ENCODE measurements at regions of chr21 and their contacts with region 1.

Region 1: DNA sequence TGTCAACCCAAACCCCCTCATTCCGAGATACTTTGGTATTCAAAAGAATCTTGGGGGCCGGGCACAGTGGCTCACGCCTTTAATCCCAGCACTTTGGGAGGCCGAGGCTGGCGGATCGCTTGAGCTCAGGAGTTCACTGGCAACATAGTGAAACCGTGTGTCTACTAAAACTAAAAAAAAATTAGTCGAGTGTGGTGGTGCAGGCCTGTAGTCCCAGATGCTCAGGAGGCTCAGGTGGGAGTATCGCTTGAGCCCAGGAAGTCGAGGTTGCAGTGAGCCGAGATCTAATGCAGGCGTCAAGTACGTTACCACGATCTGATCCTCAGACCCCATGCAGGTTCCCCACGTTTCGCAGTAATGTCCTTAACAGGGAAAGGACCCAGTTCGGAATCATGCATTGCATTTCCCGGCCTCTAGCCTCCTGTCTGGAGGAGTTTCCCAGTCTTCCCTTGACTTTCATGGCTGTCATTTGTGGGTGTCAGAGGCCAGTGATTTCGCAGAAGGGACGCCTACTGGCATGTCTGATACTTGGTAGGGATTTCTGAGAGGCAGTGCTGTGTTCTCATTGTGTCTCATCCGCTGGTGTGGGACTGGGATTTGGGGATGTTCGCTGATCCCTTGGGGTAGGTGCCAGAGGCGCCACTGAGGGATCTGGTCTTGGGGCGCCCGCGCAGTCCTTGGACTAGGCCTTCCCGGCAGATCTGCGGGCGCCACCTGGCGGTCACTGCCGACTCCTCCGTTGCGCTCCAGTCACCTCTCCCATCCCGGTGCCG is 39.3 kb upstream of the HMGN1 start:
- DNase-seq: peak; percentile 98

Region 2: GRCh38 chr21:38092051-38092450 is 1296.2 kb before region 1 on chr21:
- intact Hi-C with region 1: loop called in 1 of 2 experiments (anchors 5 kb)
- DNase-seq: no peak

Region 3: DNA sequence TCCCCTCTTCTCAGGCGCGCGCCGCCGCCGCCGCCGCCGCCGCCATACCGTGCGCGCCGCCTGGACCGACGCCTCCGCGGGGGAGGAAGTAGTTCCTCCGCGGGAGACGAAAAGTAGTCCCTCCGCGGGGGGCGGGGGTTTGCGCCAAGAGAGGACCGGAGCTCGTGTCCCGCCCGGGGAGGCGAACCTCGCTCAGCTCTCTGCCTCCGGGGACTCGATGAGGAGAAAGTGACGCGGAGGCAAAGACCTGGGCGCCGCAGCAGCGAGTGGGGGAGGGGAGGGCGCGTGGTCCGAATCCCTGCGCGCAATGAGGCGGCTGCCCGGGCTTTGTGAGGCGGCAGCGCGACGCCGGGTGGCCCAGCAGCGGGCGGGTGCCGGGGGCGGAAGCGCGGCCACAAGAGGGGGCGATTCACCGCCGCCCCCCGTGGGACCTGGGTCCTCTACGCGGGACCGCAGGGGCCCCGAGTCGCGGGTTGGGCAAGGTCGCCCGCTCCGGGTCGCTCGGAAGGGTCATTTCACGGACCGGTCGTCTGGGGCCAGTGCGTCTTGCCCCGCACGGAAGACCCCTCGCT is 74.6 kb before region 1 on chr21 and contains the start of gene BRWD1:
- intact Hi-C with region 1: loop called in 1 of 2 experiments (anchors 10 kb)
- DNase-seq: peak; percentile 94
- total RNA-seq, gene BRWD1: 35.5 to 37.3 TPM

Region 4: DNA sequence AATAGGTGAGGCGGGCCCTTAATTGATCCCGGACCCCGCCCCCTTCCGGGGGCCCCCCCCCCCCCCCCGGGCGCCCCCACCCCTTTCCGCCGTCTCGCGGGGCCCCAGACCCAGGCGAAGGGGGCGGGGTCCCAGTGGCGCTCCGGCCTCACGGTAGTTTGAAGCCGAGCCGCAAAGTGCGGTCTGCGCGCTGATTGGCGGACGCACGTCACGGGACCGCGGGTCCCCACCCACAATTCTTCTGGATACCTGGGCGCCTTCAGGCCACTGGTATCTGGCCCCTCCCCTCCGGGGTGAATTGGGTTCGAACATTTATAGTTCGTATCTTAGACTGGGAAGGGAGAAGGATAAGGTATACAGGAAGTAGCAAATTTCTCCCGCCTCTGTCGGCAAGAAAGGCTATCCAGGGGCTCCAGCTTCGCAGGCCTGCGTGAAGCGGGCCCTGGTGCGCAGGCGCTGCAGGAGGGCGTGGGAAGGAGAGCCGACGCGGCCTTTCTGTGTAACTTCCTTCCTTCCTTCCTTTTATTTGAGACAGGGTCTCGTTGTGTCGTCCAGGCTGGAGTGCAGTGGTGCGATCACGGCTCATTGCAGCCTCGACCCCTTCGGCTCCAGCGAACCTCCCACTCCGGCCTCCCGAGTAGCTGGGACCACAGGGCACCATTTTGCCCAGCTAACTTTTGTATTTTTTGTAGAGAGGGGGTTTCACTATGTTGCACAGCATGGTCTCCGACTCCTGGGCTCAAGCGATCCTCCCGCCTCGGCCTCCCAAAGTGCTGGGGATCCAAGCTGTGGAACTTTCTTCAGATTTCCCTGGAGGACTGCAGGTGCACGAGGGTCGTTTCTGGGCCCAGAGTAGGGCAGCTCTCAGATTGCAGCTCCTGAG is 38.8 kb before region 1 on chr21:
- intact Hi-C with region 1: loop called in 1 of 2 experiments (anchors 2 kb)
- DNase-seq: peak; percentile 98

Region 5: DNA sequence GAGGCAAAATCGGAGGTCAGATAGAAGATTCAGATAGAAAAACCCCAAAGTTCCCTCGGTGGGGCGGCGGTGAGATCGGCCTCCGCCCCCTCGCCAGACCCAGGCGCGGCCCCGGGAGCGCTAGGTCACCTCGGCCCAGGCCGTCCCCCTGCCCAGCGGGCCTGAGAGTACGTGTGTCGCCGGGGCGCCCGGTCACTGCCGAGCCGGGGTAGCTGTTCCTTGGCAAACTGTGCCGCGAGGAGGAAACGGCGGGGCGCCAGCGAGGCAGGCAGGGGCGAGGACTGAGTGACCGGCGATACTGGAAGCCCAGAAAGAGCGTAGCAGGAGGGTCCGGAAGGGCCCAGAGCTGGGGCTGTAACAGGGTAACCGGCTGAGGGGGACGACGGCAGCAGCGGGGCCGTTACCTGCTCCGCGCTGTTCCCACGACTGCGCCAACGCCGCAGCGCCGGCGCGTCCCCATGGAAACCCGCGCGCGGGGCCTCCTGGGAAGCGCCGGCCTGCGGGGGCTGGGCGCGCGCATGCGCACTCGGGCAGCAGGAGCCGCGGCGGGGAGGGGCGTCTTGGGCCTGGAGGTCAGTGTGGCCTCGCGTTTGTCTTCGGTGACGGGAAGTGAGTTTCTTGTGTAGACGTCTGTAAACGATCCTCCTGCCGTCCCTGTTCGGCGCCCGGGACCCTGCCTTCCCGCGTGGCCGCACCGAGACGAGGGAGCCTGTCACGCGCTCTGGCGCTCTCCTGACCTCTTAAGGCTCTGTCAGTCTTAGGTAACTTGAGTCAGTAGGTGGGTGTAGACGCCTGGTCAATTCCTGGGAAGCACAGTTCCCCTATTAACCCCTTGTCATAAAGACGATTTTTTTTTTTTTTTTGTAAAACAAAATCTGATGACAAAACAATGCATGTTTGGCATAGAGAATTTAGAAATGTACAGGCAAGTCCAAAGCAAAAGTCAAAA is 57.4 kb after region 1 on chr21 and contains the start of gene LCA5L:
- intact Hi-C with region 1: no loop called
- DNase-seq: peak; percentile 97
- total RNA-seq, gene LCA5L: 1.5 to 1.7 TPM

Region 6: DNA sequence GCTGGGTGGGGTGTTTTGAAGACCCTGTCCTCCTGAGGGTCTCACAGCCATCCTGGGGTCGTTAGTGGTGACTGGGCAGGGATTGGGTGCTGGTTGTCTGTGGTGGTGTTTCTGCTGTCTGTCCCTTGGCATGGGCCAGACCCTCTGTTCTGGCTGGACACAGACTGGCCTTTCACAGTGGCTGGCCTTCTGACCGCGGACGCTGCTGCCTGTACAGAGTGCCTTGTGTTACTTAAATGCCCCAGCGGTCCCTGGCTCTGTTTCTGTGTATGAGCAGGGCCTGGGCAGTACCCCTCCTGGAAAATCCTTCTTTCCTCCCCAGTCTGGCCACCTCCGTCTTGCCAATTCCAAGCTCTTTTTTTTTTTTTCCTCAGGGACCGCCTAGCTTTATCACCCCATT is 114.4 kb after region 1 on chr21:
- intact Hi-C with region 1: no loop called
- DNase-seq: no peak

Measured in posterior vena cava (tissue), 2 donors.